IMR-90 (cell line): ENCODE measurements at regions of chr20 and their contacts with region 1.

Region 1: DNA sequence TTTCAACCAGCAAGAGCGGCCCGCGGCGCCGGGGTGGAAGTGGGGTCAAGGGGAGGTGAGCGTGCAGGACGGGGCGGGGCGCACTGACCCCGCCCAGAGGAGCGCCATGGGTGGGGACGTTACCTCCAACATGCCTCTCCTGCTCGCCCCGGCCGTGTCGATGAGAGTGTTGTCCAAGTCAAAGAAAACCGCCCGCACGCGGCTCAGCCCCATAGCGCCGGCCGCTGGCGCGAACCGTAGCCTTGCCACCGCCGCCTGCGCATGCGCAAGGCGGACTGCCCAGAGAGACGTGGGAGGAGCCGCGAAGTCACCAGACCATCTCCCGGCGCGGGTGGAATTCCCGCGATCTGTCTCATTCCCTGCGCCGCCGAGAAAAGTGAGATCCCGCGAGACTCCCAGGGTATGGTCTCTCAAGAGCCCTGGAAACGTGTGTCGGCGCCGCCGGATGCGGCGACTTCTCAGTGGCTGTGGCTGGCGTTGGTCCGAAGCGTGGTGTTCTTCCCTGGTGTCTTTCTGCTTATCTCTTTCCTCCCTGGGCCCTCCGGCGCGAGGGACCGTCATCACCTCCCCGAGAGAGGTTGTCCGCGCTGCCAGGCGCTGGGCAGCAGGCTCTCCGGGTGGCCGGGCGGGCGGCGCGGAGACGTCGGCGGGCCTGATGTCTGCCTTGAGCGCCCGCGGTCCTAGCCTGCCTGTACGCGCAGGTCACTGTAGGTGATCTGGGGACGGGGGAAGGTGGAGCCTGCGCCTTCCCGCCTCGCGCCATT is at the start of gene NANP:
- DNase-seq: peak; percentile 98
- ATAC-seq: peak; percentile 93
- H3K4me3 ChIP-seq: peak within 1 kb of the TSS; percentile 77
- H3K27ac ChIP-seq: peak within 1 kb of the TSS; percentile 91
- H3K4me1 ChIP-seq: peaks cover 5% of the 10 kb centered on the region; the same call in 1 of the 2 replicates
- H3K27me3 ChIP-seq: no peaks in the 10 kb centered on the region
- CTCF ChIP-seq: no peak
- POLR2A ChIP-seq: peak; percentile 96
- RAD21 ChIP-seq: no peak
- total RNA-seq, gene NANP: 7.2 and 10.0 TPM in 2 replicates

Region 2: GRCh38 chr20:25389401-25389852 is 234.5 kb before region 1 on chr20:
- CTCF ChIA-PET with region 1: no interaction called
- POLR2A ChIA-PET with region 1: no interaction called
- dilution Hi-C with region 1: no loop called
- in situ Hi-C with region 1: no loop called
- intact Hi-C with region 1: no loop called
- DNase-seq: peak; percentile 57
- ATAC-seq: 0 out of 2 replicates have a peak, but pooled peaks have one; percentile 0
- H3K4me3 ChIP-seq: peak overlapping the region; percentile 98
- H3K27ac ChIP-seq: peak overlapping the region; percentile 96
- H3K4me1 ChIP-seq: peaks cover 3% of the 10 kb centered on the region
- H3K27me3 ChIP-seq: no peaks in the 10 kb centered on the region
- CTCF ChIP-seq: no peak
- POLR2A ChIP-seq: no peak
- RAD21 ChIP-seq: no peak

Region 3: GRCh38 chr20:25418776-25419175 is 205.1 kb before region 1 on chr20:
- CTCF ChIA-PET with region 1: no interaction called
- POLR2A ChIA-PET with region 1: no interaction called
- dilution Hi-C with region 1: no loop called
- in situ Hi-C with region 1: no loop called
- intact Hi-C with region 1: loop called (anchors 10 kb)
- DNase-seq: peak; percentile 69
- ATAC-seq: peak; percentile 24; the same call in 1 of the 2 replicates
- H3K4me3 ChIP-seq: no peak overlapping the region
- H3K27ac ChIP-seq: no peak overlapping the region
- H3K4me1 ChIP-seq: 0 out of 2 replicates have a peak, but pooled peaks cover 2% of the 10 kb centered on the region
- H3K27me3 ChIP-seq: no peaks in the 10 kb centered on the region
- CTCF ChIP-seq: no peak
- POLR2A ChIP-seq: no peak
- RAD21 ChIP-seq: no peak

Region 4: GRCh38 chr20:25486377-25486776 is 137.5 kb before region 1 on chr20:
- CTCF ChIA-PET with region 1: no interaction called
- POLR2A ChIA-PET with region 1: no interaction called
- dilution Hi-C with region 1: no loop called
- in situ Hi-C with region 1: no loop called
- intact Hi-C with region 1: loop called (anchors 5 kb)
- DNase-seq: peak; percentile 40
- ATAC-seq: peak; percentile 29
- H3K4me3 ChIP-seq: no peak overlapping the region
- H3K27ac ChIP-seq: no peak overlapping the region
- H3K4me1 ChIP-seq: peaks cover 3% of the 10 kb centered on the region
- H3K27me3 ChIP-seq: no peaks in the 10 kb centered on the region
- CTCF ChIP-seq: no peak
- POLR2A ChIP-seq: no peak
- RAD21 ChIP-seq: no peak

Region 5: DNA sequence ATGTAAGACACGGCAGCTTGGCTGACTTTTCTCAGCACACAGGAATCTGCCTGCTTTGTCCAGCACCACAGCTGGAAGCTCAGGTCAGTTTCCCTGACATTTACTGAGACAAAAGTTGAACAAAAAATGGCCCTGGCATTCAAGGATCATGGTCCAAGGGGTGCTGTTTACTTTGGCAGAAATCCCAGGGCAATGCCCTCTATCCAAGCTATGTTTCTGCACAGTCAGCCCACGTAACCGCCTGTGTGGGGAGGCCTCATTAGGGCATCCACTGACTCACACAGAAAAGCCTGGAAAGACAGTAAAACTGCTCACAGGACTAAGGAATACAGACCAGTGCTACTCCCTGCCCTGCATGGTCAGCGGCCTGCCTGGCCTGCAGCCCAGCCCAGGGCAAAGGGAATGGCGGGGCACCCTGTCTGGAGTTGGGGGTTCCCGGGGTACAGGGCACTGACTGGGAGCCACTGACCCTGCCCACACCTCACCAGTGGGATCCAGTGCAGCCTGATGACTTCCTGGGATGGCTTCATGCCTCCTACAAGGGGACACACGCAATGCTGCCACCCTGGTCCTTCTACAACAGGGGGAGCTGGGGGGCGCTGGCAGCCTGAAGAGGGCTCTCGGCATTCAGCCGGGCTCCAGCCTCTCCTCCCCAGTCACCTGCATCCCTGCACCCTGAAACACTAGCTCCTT is 115.7 kb before region 1 on chr20:
- CTCF ChIA-PET with region 1: no interaction called
- POLR2A ChIA-PET with region 1: no interaction called
- dilution Hi-C with region 1: no loop called
- in situ Hi-C with region 1: no loop called
- intact Hi-C with region 1: loop called (anchors 2 kb)
- DNase-seq: peak; percentile 85
- ATAC-seq: peak; percentile 97
- H3K4me3 ChIP-seq: no peak overlapping the region
- H3K27ac ChIP-seq: peak overlapping the region; percentile 49
- H3K4me1 ChIP-seq: peaks cover 10% of the 10 kb centered on the region
- H3K27me3 ChIP-seq: no peaks in the 10 kb centered on the region
- CTCF ChIP-seq: no peak
- POLR2A ChIP-seq: no peak
- RAD21 ChIP-seq: no peak

Region 6: DNA sequence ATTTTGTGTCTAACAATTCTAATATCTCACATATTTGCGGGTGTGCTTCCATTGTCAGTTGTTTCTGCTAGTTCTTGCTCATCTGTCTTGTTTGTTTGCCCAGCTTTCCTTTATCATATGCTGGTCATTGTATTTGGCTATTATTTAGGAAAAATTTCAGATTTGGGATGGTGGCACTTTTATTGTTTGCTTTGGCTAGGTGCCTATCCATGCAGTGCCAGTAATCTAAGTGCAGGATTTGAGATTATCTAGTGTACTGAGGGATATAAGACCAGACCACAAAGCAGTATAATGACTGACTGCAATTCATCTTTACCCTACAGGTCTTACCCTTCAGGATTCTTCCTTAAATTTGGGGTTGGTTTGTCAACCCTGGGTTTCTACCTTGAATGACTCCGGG is 102.5 kb before region 1 on chr20:
- CTCF ChIA-PET with region 1: no interaction called
- POLR2A ChIA-PET with region 1: no interaction called
- dilution Hi-C with region 1: no loop called
- in situ Hi-C with region 1: no loop called
- intact Hi-C with region 1: loop called (anchors 5 kb)
- DNase-seq: no peak
- ATAC-seq: no peak
- H3K4me3 ChIP-seq: no peak overlapping the region
- H3K27ac ChIP-seq: no peak overlapping the region
- H3K4me1 ChIP-seq: peaks cover 9% of the 10 kb centered on the region
- H3K27me3 ChIP-seq: no peaks in the 10 kb centered on the region
- CTCF ChIP-seq: no peak
- POLR2A ChIP-seq: no peak
- RAD21 ChIP-seq: no peak

Region 7: GRCh38 chr20:25539742-25540672 is 83.9 kb before region 1 on chr20:
- CTCF ChIA-PET with region 1: no interaction called
- POLR2A ChIA-PET with region 1: no interaction called
- dilution Hi-C with region 1: no loop called
- in situ Hi-C with region 1: no loop called
- intact Hi-C with region 1: loop called (anchors 5 kb)
- DNase-seq: peak; percentile 52
- ATAC-seq: peak; percentile 50
- H3K4me3 ChIP-seq: no peak overlapping the region
- H3K27ac ChIP-seq: no peak overlapping the region; the same call in 1 of the 2 replicates
- H3K4me1 ChIP-seq: peaks cover 23% of the 10 kb centered on the region
- H3K27me3 ChIP-seq: no peaks in the 10 kb centered on the region
- CTCF ChIP-seq: peak; percentile 32; the same call in 1 of the 2 replicates
- POLR2A ChIP-seq: no peak
- RAD21 ChIP-seq: peak; percentile 31; the same call in 1 of the 2 replicates

Region 8: DNA sequence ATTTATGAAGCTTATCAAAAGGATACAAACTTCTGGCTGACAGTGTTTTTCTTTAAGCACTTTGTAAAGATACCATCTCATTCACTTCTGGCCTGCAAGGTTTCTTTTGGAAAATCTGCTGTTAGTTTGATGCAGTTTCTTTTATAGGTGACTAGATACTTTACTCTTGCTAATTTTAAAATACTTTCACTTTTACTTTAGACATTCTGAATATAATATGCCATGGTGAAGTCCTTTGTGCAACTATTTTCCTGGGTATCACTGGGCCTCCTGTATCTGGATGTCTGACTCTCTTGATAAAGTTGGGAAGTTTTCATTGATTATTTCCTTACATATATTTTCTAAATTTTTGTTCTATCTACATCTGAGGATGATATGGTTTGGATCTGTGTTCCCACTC is 101.7 kb after region 1 on chr20:
- CTCF ChIA-PET with region 1: no interaction called
- POLR2A ChIA-PET with region 1: no interaction called
- dilution Hi-C with region 1: no loop called
- in situ Hi-C with region 1: no loop called
- intact Hi-C with region 1: no loop called
- DNase-seq: no peak
- ATAC-seq: no peak
- H3K4me3 ChIP-seq: no peak overlapping the region
- H3K27ac ChIP-seq: no peak overlapping the region
- H3K4me1 ChIP-seq: no peaks in the 10 kb centered on the region
- H3K27me3 ChIP-seq: no peaks in the 10 kb centered on the region
- CTCF ChIP-seq: no peak
- POLR2A ChIP-seq: no peak
- RAD21 ChIP-seq: no peak